ENCODE measurements at regions of chr2 and their contacts with region 1.

Region 1: DNA sequence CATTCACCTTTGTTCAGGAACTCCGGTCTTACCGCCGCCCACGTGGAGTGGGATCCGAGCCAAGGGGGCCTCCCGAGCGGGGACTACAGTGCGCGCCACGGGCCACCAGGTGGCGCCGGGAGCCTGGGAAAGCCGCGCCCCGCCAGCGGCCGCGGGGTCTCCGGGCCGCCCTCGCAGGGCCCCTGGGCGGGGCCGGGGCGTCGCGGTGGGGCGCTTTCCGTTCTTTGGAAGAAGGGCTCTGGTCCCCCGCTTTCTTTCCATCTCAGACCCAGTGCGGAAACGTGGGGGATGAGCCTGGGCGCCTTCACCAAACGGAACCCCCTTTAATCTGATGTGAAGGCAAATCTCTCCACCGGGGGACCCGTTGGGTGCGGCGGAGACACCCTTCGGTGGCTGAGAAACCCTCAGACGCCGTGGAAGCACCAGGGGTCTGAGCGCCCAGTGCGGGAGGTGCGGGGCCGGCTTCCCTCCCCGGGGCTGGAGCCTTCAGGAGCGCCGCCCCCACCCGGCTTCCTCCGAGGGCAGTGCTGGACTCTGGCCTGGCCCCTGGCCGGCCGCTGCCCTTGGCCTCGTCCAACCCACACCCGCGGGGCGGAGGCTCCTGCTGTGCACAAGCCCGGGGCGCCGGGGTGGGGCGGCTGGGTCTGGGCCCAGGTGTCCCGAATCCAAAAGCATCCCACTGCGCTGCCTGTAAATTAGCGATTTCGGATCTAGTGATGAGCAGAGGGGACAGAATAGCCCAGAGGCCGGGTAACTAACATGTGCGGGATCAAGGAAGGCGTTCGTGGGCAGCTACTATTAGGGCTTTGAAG is 44.6 kb downstream of the GORASP2 start:
- DNase-seq: peak; percentile 86 to 92
- H3K4me3 ChIP-seq: peak overlapping the region; percentile 92
- H3K4me3 Mint-ChIP-seq: peak overlapping the region; percentile 64
- H3K27ac Mint-ChIP-seq: peak overlapping the region; percentile 15
- H3K4me1 ChIP-seq: peaks cover 29% of the 10 kb centered on the region
- H3K4me1 Mint-ChIP-seq: peaks cover 7% of the 10 kb centered on the region
- H3K27me3 ChIP-seq: no peaks in the 10 kb centered on the region
- H3K27me3 Mint-ChIP-seq: no peaks in the 10 kb centered on the region
- CTCF ChIP-seq: peak; percentile 84 to 94

Region 2: GRCh38 chr2:171008550-171009205 is 35.0 kb after region 1 on chr2:
- CTCF ChIA-PET with region 1: no interaction called
- POLR2A ChIA-PET with region 1: interaction called, 12 read pairs
- intact Hi-C with region 1: no loop called
- DNase-seq: no peak
- H3K4me3 ChIP-seq: no peak overlapping the region
- H3K4me3 Mint-ChIP-seq: no peak overlapping the region
- H3K27ac Mint-ChIP-seq: no peak overlapping the region
- H3K4me1 ChIP-seq: no peaks in the 10 kb centered on the region
- H3K4me1 Mint-ChIP-seq: peaks cover 7% of the 10 kb centered on the region
- H3K27me3 ChIP-seq: no peaks in the 10 kb centered on the region
- H3K27me3 Mint-ChIP-seq: no peaks in the 10 kb centered on the region
- CTCF ChIP-seq: no peak

Region 3: DNA sequence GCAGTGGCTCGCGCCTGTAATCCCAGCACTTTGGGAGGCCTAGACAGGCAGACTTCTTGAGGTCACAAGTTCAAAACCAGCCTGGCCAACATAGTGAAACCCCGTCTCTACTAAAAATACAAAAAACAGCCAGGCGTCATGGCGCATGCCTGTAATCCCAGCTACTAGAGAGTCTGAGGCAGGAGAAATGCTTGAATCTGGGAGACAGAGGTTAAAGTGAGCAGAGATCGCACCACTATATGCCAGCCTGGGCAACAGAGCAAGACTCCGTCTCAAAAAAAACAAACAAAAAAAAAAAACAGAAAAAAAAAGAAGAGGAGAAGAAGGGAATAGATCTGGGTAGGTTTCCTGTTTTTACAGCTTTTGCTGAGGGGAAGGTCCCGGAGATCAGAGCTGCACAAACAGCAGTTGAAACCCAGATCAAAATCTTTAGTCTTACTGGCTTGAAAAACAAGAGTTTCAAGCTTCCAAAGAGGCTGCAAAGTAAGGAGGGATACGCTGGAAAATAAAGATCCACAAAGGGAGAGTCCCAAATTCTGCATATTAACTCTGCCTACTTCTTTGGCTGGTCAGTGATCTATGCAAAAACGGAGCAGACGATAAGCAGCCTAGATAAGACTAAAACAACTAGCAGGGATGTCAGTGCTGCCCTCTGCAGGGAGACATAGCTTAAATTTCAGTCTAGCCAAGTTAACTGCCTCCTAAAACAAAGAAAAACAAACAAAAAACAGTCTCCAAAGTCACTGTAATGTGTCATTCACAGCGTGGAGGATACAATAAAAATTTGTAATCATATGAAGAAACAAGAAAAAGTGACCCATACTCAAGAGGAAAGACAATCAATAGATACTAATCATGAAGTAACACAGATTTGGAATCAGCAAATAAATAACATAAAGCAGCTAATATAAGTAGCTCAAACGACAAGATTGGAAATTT is 112.9 kb after region 1 on chr2:
- CTCF ChIA-PET with region 1: interaction called, 12 read pairs
- POLR2A ChIA-PET with region 1: no interaction called
- intact Hi-C with region 1: loop called (anchors 1 kb)
- DNase-seq: peak; percentile 56 to 64
- H3K4me3 ChIP-seq: no peak overlapping the region
- H3K4me3 Mint-ChIP-seq: peak overlapping the region; percentile 34
- H3K27ac Mint-ChIP-seq: peak overlapping the region; percentile 6
- H3K4me1 ChIP-seq: no peaks in the 10 kb centered on the region
- H3K4me1 Mint-ChIP-seq: peaks cover 34% of the 10 kb centered on the region
- H3K27me3 ChIP-seq: no peaks in the 10 kb centered on the region
- H3K27me3 Mint-ChIP-seq: no peaks in the 10 kb centered on the region
- CTCF ChIP-seq: peak; percentile 72 to 79

Region 4: GRCh38 chr2:171160119-171160955 is 186.6 kb after region 1 on chr2 and contains the start of gene TLK1:
- CTCF ChIA-PET with region 1: interaction called, 7 read pairs
- POLR2A ChIA-PET with region 1: interaction called, 9 read pairs
- intact Hi-C with region 1: loop called (anchors 1 kb)
- DNase-seq: peak; percentile 82
- H3K4me3 ChIP-seq: peak within 1 kb of the TSS; percentile 96
- H3K4me3 Mint-ChIP-seq: peak within 1 kb of the TSS; percentile 76
- H3K27ac Mint-ChIP-seq: peak within 1 kb of the TSS; percentile 94
- H3K4me1 ChIP-seq: peaks cover 12% of the 10 kb centered on the region
- H3K4me1 Mint-ChIP-seq: peaks cover 23% of the 10 kb centered on the region
- H3K27me3 ChIP-seq: no peaks in the 10 kb centered on the region
- H3K27me3 Mint-ChIP-seq: no peaks in the 10 kb centered on the region
- CTCF ChIP-seq: no peak
- total RNA-seq, gene TLK1: 77.7 and 85.1 TPM in 2 replicates

Region 5: DNA sequence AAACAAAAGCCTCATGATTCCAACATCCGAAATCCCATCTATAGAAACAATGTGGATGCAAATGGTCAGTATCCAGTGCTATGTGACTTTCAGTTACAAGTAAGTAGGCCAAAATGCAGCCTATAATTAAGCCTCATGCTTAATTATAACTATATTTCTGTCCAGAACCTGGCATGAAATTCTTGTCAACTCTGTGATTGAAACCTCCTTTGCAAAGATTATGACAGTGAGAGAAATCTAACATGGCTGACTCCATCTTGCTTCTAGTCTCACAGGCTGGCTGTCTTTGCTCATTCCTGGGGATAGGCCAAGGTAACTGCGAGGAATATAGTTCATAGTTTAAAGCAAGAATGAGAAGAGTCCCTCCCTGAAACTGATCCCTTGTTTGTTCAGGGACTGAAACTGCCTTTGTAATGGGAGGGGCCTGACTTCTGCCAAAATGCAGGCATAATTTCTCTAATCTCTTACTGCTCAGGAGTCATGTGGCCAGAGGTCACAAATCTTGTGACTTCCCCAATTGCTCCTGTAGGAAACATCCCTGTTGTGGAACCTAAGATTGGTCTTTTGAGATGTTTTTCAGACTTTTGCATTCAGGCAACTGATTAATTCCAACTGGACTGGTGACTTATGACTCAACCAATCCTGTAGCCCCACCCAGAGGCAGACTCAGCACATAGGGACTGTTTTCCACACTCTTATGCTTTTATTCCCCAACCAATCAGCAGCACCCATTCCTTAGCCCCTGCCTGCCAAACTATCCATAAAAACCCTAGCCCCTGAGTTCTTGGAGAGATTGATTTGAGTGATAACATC is 271.5 kb after region 1 on chr2:
- CTCF ChIA-PET with region 1: no interaction called
- POLR2A ChIA-PET with region 1: no interaction called
- intact Hi-C with region 1: loop called (anchors 10 kb)
- DNase-seq: peak in 1 of 2 experiments; percentile 22
- H3K4me3 ChIP-seq: no peak overlapping the region
- H3K4me3 Mint-ChIP-seq: no peak overlapping the region
- H3K27ac Mint-ChIP-seq: no peak overlapping the region
- H3K4me1 ChIP-seq: no peaks in the 10 kb centered on the region
- H3K4me1 Mint-ChIP-seq: peaks cover 6% of the 10 kb centered on the region
- H3K27me3 ChIP-seq: no peaks in the 10 kb centered on the region
- H3K27me3 Mint-ChIP-seq: no peaks in the 10 kb centered on the region
- CTCF ChIP-seq: no peak

Region 6: GRCh38 chr2:171416009-171416926 is 442.6 kb after region 1 on chr2:
- CTCF ChIA-PET with region 1: interaction called, 32 read pairs
- POLR2A ChIA-PET with region 1: no interaction called
- intact Hi-C with region 1: loop called (anchors 1 kb)
- DNase-seq: peak; percentile 89 to 94
- H3K4me3 ChIP-seq: no peak overlapping the region
- H3K4me3 Mint-ChIP-seq: peak overlapping the region; percentile 61
- H3K27ac Mint-ChIP-seq: peak overlapping the region; percentile 63
- H3K4me1 ChIP-seq: peaks cover 3% of the 10 kb centered on the region; the same call in 1 of the 2 replicates
- H3K4me1 Mint-ChIP-seq: peaks cover 9% of the 10 kb centered on the region
- H3K27me3 ChIP-seq: no peaks in the 10 kb centered on the region
- H3K27me3 Mint-ChIP-seq: no peaks in the 10 kb centered on the region
- CTCF ChIP-seq: peak; percentile 75 to 92

Region 7: GRCh38 chr2:171433763-171434670 is 460.3 kb after region 1 on chr2 and contains the starts of genes DCAF17 and METTL8:
- CTCF ChIA-PET with region 1: interaction called, 5 read pairs
- POLR2A ChIA-PET with region 1: no interaction called
- intact Hi-C with region 1: loop called (anchors 5 kb)
- DNase-seq: peak; percentile 98 to 99
- H3K4me3 ChIP-seq: peak within 1 kb of the TSS; percentile 89
- H3K4me3 Mint-ChIP-seq: peak within 1 kb of the TSS; percentile 90
- H3K27ac Mint-ChIP-seq: peak within 1 kb of the TSS; percentile 98
- H3K4me1 ChIP-seq: peaks cover 7% of the 10 kb centered on the region
- H3K4me1 Mint-ChIP-seq: peaks cover 16% of the 10 kb centered on the region
- H3K27me3 ChIP-seq: no peaks in the 10 kb centered on the region
- H3K27me3 Mint-ChIP-seq: no peaks in the 10 kb centered on the region
- CTCF ChIP-seq: peak; percentile 69 to 76
- total RNA-seq, gene DCAF17: 20.8 and 22.7 TPM in 2 replicates
- total RNA-seq, gene METTL8: 25.7 and 28.5 TPM in 2 replicates